OCI-LY7 (cell line): ENCODE measurements at regions of chr14 and their contacts with region 1.

Region 1: GRCh38 chr14:50532502-50533240 is at the start of gene MAP4K5:
- DNase-seq: peak; percentile 93
- H3K4me3 ChIP-seq: peak within 1 kb of the TSS; percentile 89
- H3K27ac ChIP-seq: peak within 1 kb of the TSS; percentile 71
- H3K4me1 ChIP-seq: peaks cover 27% of the 10 kb centered on the region
- CTCF ChIP-seq: peak; percentile 85
- total RNA-seq, gene MAP4K5: 44.0 and 49.8 TPM in 2 replicates

Region 2: DNA sequence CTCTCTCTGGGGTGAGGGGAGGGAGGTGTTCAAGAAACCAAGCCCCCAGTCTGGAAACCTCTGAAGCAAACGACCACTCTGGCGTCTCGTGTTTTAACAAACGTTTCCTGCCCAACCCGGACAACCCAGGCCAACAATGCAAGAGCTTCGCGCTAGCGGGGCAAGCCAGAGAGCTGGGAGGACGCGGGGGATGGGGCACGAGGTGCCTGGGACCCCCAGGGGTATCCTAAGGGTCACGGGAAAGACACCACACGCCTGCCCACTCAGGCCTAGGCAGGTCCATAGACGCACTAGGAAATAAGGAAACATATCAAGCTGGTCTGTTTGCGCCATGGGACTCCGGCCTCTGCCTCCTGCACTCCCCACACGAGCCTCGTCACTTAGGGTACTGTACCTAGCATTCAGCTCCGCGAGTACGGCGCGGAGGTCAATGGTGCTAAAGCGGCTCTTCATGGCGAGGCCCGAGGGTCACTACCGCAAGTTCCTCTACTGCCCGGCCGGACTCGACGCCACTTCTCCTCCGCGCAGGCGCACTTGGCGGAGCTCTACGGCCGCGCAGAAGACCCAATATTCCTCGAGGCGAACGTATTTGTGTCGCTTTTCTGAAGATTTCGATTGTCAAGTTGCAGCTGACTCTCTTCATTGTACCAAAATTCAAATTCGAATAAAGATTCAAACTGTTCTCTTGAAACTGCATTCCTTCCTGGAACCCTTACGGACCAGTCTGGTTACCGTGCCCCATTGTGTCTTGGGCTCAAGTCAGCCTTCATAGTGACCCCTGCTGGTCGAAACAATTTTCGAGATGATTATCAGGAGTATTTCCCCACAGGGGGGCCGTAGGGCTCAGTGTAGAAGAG is 680.1 kb before region 1 on chr14 and contains the start of gene NEMF:
- CTCF ChIA-PET with region 1: no interaction called
- POLR2A ChIA-PET with region 1: no interaction called
- intact Hi-C with region 1: loop called (anchors 5 kb)
- DNase-seq: peak; percentile 93
- H3K4me3 ChIP-seq: peak within 1 kb of the TSS; percentile 93
- H3K27ac ChIP-seq: peak within 1 kb of the TSS; percentile 55
- H3K4me1 ChIP-seq: peaks cover 39% of the 10 kb centered on the region
- CTCF ChIP-seq: peak; percentile 99
- total RNA-seq, gene NEMF: 63.2 and 71.3 TPM in 2 replicates

Region 3: DNA sequence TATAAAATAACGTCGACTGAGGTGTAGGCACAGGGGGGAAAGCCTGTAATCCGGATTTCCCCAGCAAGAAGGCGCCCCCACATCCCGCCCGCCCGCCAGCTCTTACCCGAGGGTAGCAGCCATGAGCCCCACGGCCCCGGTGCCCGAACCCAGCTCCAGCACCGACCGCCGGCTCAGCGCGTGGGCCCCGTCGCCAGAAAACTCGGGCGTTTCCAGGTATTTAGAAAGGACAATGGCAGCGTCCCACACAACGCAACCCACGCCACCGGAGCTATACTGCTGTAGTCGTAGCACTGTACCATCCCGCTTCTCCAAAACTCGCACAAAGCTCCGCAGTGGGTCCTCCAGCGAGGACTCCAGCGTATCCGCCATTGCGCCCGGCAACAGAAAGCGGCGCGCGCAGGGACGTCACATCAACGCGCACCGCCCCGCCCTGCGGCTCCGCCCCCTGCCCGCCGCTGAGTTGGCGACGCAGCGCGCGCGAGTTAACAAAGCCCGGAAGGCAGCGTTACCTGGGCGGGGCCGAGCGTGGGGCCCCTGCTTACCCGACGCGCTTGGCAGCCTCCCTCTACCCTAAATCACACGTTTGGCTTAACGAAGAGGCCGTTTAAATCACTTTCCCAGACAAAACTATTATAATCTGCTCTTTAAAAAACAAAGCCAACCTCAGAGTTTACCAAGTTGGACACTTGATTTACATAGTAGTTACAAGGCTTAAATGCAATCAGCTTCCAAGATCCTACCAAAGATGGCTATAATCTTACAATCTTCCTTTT is 416.3 kb before region 1 on chr14 and contains the start of gene VCPKMT:
- CTCF ChIA-PET with region 1: no interaction called
- POLR2A ChIA-PET with region 1: no interaction called
- intact Hi-C with region 1: loop called (anchors 1 kb)
- DNase-seq: peak; percentile 96
- H3K4me3 ChIP-seq: peak within 1 kb of the TSS; percentile 78
- H3K27ac ChIP-seq: peak within 1 kb of the TSS; percentile 65
- H3K4me1 ChIP-seq: peaks cover 36% of the 10 kb centered on the region
- CTCF ChIP-seq: no peak
- total RNA-seq, gene VCPKMT: 13.3 and 13.5 TPM in 2 replicates

Region 4: DNA sequence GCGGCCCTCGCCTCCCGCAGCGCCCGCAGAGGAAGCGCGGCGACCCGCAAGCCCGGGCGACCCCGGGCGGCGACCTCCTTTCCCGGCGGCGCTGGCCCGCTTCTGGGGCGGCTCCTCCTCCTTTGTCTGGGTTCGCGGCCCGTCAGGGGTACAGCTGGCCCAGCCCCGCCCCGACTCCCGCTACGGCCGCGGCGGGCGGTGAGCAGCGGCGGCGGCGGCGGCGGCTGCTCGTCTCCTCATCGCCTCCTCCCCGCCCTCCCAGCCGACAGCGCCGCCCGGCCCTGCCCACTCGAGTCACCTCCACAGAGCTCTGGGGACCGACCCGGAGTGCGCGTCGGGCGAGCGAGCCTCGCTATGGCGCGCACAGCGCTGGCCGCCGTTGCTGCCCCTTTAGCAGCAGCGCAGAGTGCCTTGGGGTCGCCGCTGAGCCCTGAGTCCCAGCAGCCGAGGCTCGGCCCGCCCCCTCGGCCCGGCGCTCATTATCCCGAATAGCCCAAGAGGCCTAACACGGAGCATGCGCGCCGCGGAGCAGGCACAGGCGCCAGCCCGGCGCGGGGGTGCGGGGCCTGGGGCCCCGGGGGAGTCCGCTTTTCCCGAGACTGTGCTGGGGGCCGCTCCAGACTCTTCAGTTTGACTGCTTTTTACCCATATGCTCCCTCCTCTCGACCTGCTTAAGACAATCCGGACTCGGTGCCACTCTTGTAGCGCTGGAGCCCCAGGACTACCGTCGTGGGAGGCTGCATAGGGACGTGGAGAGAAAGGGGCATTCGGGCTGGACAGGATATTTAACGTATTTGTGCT is 301.0 kb before region 1 on chr14 and contains the start of gene SOS2:
- CTCF ChIA-PET with region 1: no interaction called
- POLR2A ChIA-PET with region 1: no interaction called
- intact Hi-C with region 1: loop called (anchors 2 kb)
- DNase-seq: peak; percentile 91
- H3K4me3 ChIP-seq: peak within 1 kb of the TSS; percentile 94
- H3K27ac ChIP-seq: peak within 1 kb of the TSS; percentile 81
- H3K4me1 ChIP-seq: peaks cover 18% of the 10 kb centered on the region
- CTCF ChIP-seq: 0 out of 2 replicates have a peak, but pooled peaks have one; percentile 12
- total RNA-seq, gene SOS2: 13.5 and 16.5 TPM in 2 replicates

Region 5: GRCh38 chr14:50311975-50312733 is 220.5 kb before region 1 on chr14 and contains the starts of genes DMAC2L and L2HGDH:
- CTCF ChIA-PET with region 1: no interaction called
- POLR2A ChIA-PET with region 1: no interaction called
- intact Hi-C with region 1: loop called (anchors 2 kb)
- DNase-seq: peak; percentile 97
- H3K4me3 ChIP-seq: peak within 1 kb of the TSS; percentile 73
- H3K27ac ChIP-seq: peak within 1 kb of the TSS; percentile 77
- H3K4me1 ChIP-seq: peaks cover 16% of the 10 kb centered on the region
- CTCF ChIP-seq: 0 out of 2 replicates have a peak, but pooled peaks have one; percentile 3
- total RNA-seq, gene DMAC2L: 5.8 and 13.8 TPM in 2 replicates
- total RNA-seq, gene L2HGDH: 8.7 and 10.0 TPM in 2 replicates

Region 6: GRCh38 chr14:50321009-50321660 is 211.5 kb before region 1 on chr14:
- CTCF ChIA-PET with region 1: no interaction called
- POLR2A ChIA-PET with region 1: no interaction called
- intact Hi-C with region 1: loop called (anchors 1 kb)
- DNase-seq: peak; percentile 80
- H3K4me3 ChIP-seq: no peak overlapping the region
- H3K27ac ChIP-seq: no peak overlapping the region
- H3K4me1 ChIP-seq: peaks cover 14% of the 10 kb centered on the region
- CTCF ChIP-seq: peak; percentile 99

Region 7: DNA sequence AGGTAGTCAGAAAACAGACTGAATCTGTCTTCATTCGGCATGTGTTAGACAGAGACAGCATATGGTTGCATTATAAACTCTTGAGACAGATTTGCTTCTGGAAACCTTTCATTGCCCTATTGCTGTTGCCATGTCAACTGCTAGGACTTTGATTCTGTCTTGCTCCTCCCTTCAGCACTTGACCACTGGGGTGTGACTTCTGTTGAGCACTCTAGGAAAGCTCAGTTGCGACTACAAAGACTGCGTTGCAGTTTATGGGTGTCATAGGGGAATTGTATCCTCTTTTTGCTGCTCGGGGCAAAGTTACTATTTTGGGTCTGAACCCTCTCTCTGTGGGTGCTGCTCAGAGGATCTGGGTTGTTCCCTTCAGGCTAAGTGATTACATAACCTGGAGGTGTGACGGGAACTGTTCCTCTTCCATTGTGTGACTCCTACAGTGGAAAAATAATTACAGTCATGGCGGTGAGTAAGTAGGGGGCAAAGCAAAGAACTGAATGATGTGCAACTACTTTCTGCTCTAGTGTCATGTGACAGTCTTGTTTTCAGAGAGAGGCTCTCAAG is 606.5 kb after region 1 on chr14:
- CTCF ChIA-PET with region 1: no interaction called
- POLR2A ChIA-PET with region 1: interaction called, 12 read pairs
- intact Hi-C with region 1: no loop called
- DNase-seq: no peak
- H3K4me3 ChIP-seq: no peak overlapping the region
- H3K27ac ChIP-seq: no peak overlapping the region
- H3K4me1 ChIP-seq: no peaks in the 10 kb centered on the region
- CTCF ChIP-seq: no peak